ENCODE measurements at regions of chr12 and their contacts with region 1.

Region 1: DNA sequence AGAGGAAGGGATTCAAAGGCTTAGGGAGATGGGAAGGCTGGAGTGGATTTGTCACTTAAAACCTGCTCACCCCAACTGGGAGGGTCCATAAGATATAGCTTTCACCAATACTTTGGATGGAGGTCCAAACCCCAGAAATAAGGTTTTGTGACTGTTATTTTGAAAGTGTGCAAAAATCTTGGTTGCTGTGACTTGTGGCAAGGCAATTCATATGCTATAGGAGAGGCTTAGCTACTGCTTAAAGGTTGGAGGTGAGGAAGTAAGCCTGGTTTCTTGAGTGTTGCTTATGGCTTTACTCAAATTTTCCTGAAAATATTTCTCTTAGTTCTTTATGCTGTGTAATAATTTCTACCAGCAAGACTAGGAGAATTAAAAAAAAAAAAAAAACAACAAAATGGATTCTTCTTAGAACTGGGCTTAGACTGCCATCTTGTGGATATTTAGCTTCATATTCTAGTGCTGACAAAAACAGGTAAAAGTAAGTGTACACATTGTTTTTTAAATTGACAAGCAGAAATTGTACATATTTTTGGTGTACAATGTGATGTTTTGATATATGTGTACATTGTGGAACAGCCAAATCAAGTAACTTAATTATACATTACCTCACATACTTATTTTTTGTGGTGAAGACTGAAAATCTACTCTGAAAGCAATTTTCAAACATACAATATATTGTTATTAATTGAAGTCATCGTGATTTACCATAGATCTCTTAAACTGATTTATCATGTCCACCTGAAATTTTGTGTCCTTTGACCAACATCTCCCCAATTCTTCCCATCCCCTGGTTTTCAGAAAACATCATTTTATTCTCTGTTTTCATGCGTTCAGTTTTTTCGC is 23.0 kb downstream of the PDE6H start:
- DNase-seq: no peak
- H3K4me3 ChIP-seq: no peak overlapping the region
- H3K27ac ChIP-seq: peak overlapping the region in 2 of 3 donors; percentile 18 to 64
- H3K4me1 ChIP-seq: peaks cover 10 to 21% of the 10 kb centered on the region in 2 donors
- H3K27me3 ChIP-seq: no peaks in the 10 kb centered on the region
- CTCF ChIP-seq: peak; percentile 6 to 87 (median 46)
- POLR2A ChIP-seq: no peak

Region 2: GRCh38 chr12:14845350-14845750 is 150.5 kb before region 1 on chr12:
- intact Hi-C with region 1: loop called (anchors 2 kb)
- DNase-seq: peak; percentile 50 to 51
- H3K4me3 ChIP-seq: no peak overlapping the region
- H3K27ac ChIP-seq: peak overlapping the region; percentile 54 to 68 (median 67)
- H3K4me1 ChIP-seq: peaks cover 36 to 48% of the 10 kb centered on the region in 2 donors
- H3K27me3 ChIP-seq: no peaks in the 10 kb centered on the region
- CTCF ChIP-seq: peak; percentile 46 to 97 (median 80)
- POLR2A ChIP-seq: no peak

Region 3: GRCh38 chr12:14937689-14938088 is 58.1 kb before region 1 on chr12:
- intact Hi-C with region 1: loop called (anchors 10 kb)
- DNase-seq: no peak
- H3K4me3 ChIP-seq: no peak overlapping the region
- H3K27ac ChIP-seq: no peak overlapping the region
- H3K4me1 ChIP-seq: no peaks in the 10 kb centered on the region
- H3K27me3 ChIP-seq: no peaks in the 10 kb centered on the region
- CTCF ChIP-seq: no peak
- POLR2A ChIP-seq: no peak

Region 4: GRCh38 chr12:14952299-14952921 is 43.4 kb before region 1 on chr12:
- intact Hi-C with region 1: no loop called
- DNase-seq: peak; percentile 26 to 35
- H3K4me3 ChIP-seq: no peak overlapping the region
- H3K27ac ChIP-seq: peak overlapping the region; percentile 85 to 91 (median 86)
- H3K4me1 ChIP-seq: peaks cover 37 to 73% of the 10 kb centered on the region in 2 donors
- H3K27me3 ChIP-seq: no peaks in the 10 kb centered on the region
- CTCF ChIP-seq: no peak
- POLR2A ChIP-seq: no peak